ENCODE measurements at regions of chrX and their contacts with region 1.

Region 1: GRCh38 chrX:107894038-107894437 is 68.4 kb downstream of the MID2 start:
- DNase-seq: no peak
- ATAC-seq: no peak

Region 2: DNA sequence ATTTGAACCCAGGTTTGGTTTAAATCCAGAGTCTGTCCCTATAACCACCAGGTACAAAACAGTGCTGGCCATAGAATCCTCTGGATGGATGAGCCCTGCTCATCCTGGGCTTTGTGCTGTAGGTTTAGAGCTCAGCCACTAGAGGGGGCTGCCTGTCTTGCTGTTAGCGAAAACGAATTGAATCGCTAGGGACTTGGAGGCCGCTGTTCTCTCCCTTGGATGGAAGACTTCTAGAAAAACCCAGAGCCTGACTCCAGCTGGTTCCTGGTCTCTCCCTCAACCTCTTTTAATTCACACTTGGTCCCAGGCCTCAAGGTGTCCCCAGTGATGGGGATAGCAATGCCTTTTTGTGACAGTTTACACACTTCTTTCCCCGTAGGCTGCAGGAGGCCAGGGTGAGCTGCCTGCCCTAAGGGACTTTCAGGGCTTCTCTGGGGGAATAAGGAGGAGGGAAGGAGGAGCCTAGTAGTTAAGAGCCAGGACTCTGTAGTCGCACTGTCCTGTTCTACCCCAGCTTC is 999.6 kb before region 1 on chrX:
- intact Hi-C with region 1: loop called (anchors 10 kb)
- DNase-seq: no peak
- ATAC-seq: peak; percentile 79

Region 3: DNA sequence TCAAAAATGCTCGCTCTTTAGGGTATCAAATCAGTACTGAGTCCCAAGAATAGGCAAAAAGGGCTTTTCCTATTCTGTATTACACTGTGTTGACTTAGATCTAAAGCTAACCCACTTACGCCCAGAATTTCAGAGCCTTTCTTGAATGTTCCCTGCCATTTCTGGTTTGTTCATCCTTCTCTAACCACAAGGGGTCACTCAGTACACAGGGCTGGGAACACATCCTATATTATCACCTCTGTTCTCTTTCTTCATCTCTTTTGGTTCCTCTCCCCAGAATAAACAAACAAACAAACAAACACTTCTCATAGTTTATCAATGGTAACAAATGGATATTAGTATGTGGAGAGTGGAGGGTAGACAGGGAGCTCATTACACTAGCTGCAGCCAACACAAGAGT is 868.5 kb before region 1 on chrX:
- intact Hi-C with region 1: loop called (anchors 2 kb)
- DNase-seq: no peak
- ATAC-seq: no peak

Region 4: DNA sequence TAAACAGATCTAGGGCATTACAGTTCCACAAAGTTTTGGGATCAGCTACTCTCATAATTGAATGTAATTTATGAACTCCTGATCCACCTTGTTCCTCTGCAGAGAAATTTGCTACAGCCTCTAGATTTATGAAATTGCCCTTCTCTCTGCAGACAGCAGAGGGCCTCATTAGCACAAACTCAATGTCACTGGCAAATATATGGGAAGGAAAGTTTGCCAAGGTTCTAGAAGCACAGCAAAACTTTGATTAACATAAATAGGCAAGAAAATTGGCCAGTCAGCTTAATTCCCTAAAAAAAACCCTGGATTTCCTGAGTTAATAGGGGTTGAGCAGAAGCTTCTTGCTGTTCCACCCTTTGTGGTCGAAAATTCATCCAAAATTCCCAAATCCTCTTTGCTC is 234.3 kb before region 1 on chrX:
- intact Hi-C with region 1: loop called (anchors 2 kb)
- DNase-seq: no peak
- ATAC-seq: peak; percentile 38

Measured in Right ventricle myocardium inferior (tissue), 1 donor.